ENCODE measurements at regions of chr12 and their contacts with region 1.

Region 1: GRCh38 chr12:99413751-99414150 is 233.8 kb upstream of the GARIN6 start:
- DNase-seq: no peak
- ATAC-seq: peak; percentile 29; the same call in 2 of the 3 replicates
- H3K4me3 ChIP-seq: no peak overlapping the region
- H3K27ac ChIP-seq: no peak overlapping the region
- H3K4me1 ChIP-seq: no peaks in the 10 kb centered on the region
- H3K27me3 ChIP-seq: no peaks in the 10 kb centered on the region
- CTCF ChIP-seq: no peak
- EP300 ChIP-seq: no peak
- POLR2A ChIP-seq: no peak
- RAD21 ChIP-seq: no peak

Region 2: DNA sequence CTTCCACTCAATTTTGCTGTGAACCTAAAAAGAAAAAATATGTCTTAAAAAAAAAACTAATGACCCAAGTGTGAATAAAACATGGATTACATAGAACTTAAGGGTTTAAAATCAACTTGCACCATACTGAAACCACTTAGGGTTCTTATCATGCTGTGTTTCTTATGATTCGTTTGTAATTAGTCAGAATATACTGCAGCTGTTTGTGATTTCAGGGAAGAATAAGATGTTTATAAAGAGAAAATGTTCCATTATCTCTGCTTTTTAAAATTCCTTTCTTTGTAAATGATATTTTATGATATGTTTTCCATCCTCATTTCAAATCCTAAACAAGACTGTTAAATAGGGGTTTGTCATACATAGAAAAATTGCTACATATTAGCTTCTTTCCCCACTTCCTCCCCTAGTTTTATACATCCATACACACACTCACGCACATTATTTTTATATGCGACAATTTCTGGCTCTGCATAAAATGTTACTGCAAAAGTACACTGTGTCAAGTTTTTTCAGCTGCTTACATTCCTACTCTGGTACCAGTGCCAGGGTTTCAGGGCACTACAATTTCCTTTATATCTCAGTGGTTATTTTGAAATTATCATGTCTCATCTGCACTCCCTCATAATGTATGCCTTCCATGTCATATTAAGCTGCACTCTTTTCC is 41.4 kb before region 1 on chr12:
- CTCF ChIA-PET with region 1: no interaction called
- POLR2A ChIA-PET with region 1: no interaction called
- RAD21 ChIA-PET with region 1: no interaction called
- SMC1A ChIA-PET with region 1: no interaction called
- in situ Hi-C with region 1: no loop called
- intact Hi-C with region 1: no loop called
- DNase-seq: no peak
- ATAC-seq: no peak
- H3K4me3 ChIP-seq: no peak overlapping the region
- H3K27ac ChIP-seq: no peak overlapping the region
- H3K4me1 ChIP-seq: no peaks in the 10 kb centered on the region
- H3K27me3 ChIP-seq: no peaks in the 10 kb centered on the region
- CTCF ChIP-seq: no peak
- EP300 ChIP-seq: no peak
- POLR2A ChIP-seq: no peak
- RAD21 ChIP-seq: no peak

Region 3: GRCh38 chr12:99393763-99394162 is 20.0 kb before region 1 on chr12:
- CTCF ChIA-PET with region 1: interaction called, 4 read pairs
- POLR2A ChIA-PET with region 1: no interaction called
- RAD21 ChIA-PET with region 1: interaction called, 3 read pairs
- SMC1A ChIA-PET with region 1: interaction called, 3 read pairs
- in situ Hi-C with region 1: no loop called
- intact Hi-C with region 1: loop called (anchors 2 kb)
- DNase-seq: no peak
- ATAC-seq: peak; percentile 61
- H3K4me3 ChIP-seq: no peak overlapping the region
- H3K27ac ChIP-seq: no peak overlapping the region
- H3K4me1 ChIP-seq: no peaks in the 10 kb centered on the region
- H3K27me3 ChIP-seq: no peaks in the 10 kb centered on the region
- CTCF ChIP-seq: no peak
- EP300 ChIP-seq: no peak
- POLR2A ChIP-seq: no peak
- RAD21 ChIP-seq: no peak